AG04450 (cell line): ENCODE measurements at regions of chr6 and their contacts with region 1.

Region 1: GRCh38 chr6:108558372-108559096 is 2.2 kb upstream of the FOXO3 start:
- DNase-seq: peak; percentile 100
- H3K4me3 ChIP-seq: peak overlapping the region; percentile 93
- H3K27ac ChIP-seq: peak overlapping the region; percentile 98
- H3K27me3 ChIP-seq: no peaks in the 10 kb centered on the region
- CTCF ChIP-seq: no peak

Region 2: DNA sequence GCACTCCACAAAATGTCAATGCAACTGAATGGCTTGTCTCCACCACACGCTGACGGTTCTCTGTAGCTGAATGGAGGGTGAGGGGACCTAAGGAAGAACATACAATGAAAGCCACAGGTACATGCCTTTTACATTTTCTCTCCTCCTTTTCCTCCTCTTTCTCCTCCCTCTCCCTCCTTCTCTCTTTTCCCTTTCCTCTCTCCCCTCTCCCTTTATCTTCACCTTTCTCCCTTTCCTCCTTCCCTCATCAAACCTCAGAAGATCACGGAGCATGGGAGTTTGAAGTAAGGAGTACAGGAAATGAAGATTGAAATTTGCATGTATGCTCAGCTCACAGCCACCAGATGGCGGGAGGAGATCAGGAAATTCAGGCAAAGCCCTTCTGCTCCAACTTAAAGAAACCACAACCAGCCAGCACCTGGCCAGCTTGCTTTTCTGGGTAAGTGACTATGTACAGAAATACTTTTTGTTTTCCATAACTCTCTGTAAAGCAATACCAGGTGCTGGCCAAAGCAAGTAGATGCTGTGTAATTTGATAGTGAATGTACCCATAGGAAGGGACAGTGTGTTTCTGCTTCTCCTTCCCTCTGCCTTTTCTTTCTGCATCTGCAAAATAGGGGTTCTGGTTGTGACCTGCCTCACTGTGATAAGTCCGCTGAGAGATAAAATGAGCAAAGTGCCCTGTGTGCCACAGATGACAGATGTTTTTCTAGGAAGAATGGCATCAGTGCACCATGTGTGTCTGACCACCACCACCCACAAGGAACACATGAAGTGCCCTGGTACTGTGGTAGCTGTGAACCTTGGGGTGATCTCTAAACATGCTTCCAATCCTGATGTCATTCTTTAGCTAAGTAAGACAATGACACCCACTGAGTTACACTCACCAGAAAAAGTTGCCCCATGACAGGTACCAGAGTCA is 16.4 kb before region 1 on chr6:
- CTCF ChIA-PET with region 1: interaction called, 7 read pairs
- POLR2A ChIA-PET with region 1: interaction called, 19 read pairs
- DNase-seq: peak; percentile 79
- H3K4me3 ChIP-seq: no peak overlapping the region
- H3K27ac ChIP-seq: no peak overlapping the region
- H3K27me3 ChIP-seq: peaks cover 2% of the 10 kb centered on the region
- CTCF ChIP-seq: peak; percentile 90

Region 3: GRCh38 chr6:108570517-108570916 is 12.0 kb after region 1 on chr6:
- CTCF ChIA-PET with region 1: no interaction called
- POLR2A ChIA-PET with region 1: no interaction called
- DNase-seq: no peak
- H3K4me3 ChIP-seq: no peak overlapping the region
- H3K27ac ChIP-seq: no peak overlapping the region
- H3K27me3 ChIP-seq: no peaks in the 10 kb centered on the region
- CTCF ChIP-seq: peak; percentile 41

Region 4: GRCh38 chr6:108651340-108652227 is 93.0 kb after region 1 on chr6:
- CTCF ChIA-PET with region 1: no interaction called
- POLR2A ChIA-PET with region 1: interaction called, 14 read pairs
- DNase-seq: peak; percentile 67
- H3K4me3 ChIP-seq: peak overlapping the region; percentile 14; the same call in 1 of the 2 replicates
- H3K27ac ChIP-seq: peak overlapping the region; percentile 90
- H3K27me3 ChIP-seq: no peaks in the 10 kb centered on the region
- CTCF ChIP-seq: no peak

Region 5: DNA sequence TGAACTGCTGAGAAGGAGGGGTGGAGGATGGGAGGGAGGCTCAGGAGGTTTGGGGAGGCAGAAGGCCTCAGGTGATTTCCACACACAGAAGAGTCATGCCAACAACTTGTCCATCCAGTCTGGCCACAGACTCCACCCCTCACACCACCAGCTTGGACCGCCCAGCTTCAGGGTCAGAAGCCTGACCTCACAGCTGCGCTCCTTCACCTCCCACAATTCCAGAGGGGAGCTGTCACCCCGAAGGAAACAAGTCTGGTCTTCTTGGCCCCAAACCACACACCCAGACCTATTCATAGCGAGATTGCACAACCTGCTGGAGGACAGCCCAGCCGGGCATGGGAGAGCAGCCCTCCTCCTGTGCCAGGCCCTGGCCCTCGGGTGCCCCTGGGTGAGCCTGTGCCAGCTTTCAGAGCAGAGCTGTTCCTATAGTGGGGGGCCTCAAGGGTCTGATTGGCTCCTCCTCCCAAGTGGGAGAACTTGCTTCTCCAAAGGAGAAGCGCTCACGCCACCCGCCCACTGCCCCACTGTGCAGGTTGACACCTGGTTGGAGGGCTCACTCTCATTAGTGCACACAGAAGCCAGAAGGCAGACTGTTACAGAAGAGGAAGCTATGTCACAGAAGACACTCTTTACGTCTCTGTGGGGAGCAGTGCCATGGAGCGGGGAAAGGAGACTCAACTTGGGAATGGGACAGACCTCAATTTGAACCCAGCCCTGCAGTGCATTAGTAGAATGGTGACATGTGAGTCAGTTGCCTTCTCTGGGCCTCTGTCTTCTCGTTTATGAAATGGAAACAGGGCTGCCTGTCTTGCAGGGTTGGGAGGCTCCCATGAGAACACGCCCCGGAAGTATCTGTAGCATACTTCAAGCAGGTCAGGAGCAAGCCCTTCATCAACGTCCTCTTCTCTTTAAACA is 131.0 kb after region 1 on chr6:
- CTCF ChIA-PET with region 1: no interaction called
- POLR2A ChIA-PET with region 1: interaction called, 10 read pairs
- DNase-seq: peak; percentile 89
- H3K4me3 ChIP-seq: no peak overlapping the region
- H3K27ac ChIP-seq: peak overlapping the region; percentile 34
- H3K27me3 ChIP-seq: no peaks in the 10 kb centered on the region
- CTCF ChIP-seq: no peak

Region 6: DNA sequence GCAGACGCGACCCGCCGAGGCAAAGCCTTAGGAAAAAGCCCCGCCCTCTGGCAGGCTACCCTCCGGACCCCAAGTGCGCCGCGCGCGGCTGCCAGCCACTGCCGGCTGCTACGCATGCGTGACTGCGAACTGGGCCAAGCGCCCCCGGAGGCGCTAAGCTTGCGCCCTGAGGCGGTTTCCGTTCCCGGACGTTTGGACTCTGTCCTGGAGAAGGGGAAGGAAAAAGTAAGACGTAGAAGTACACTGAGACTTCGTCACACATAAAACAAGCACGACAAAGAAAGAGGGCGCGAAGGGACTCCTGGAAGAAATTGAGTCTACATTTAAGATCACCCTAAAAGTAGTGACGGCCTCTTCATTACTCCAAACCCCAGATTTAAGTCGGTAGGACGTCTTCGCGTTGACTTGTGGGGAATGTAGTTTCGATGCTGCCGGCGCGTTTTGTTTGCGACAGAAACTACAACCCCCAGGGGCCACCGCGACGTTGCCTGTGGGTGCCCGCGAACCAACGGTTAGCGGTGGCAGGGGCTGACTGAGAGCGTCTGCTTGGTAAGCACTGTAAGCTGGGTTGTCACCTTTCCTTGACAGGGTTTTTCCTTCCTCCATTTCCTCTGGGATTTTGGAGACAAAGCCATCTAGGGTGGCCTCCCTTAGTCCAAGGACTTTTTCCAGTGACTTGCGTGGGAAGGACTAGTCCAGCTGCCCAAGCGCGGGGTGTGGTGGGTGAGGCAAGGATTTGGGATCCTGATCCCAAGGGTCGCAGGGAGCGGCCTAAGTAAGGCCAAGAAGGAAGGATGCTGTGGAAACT is 536.7 kb after region 1 on chr6 and contains the start of gene CEP57L1:
- CTCF ChIA-PET with region 1: interaction called, 3 read pairs
- POLR2A ChIA-PET with region 1: interaction called, 15 read pairs
- DNase-seq: peak; percentile 90
- H3K4me3 ChIP-seq: peak within 1 kb of the TSS; percentile 93
- H3K27ac ChIP-seq: peak within 1 kb of the TSS; percentile 97
- H3K27me3 ChIP-seq: no peaks in the 10 kb centered on the region
- CTCF ChIP-seq: 0 out of 2 replicates have a peak, but pooled peaks have one; percentile 14
- polyA plus RNA-seq, gene CEP57L1: 16.5 and 21.2 TPM in 2 replicates